ENCODE measurements at regions of chr4 and their contacts with region 1.

Region 1: DNA sequence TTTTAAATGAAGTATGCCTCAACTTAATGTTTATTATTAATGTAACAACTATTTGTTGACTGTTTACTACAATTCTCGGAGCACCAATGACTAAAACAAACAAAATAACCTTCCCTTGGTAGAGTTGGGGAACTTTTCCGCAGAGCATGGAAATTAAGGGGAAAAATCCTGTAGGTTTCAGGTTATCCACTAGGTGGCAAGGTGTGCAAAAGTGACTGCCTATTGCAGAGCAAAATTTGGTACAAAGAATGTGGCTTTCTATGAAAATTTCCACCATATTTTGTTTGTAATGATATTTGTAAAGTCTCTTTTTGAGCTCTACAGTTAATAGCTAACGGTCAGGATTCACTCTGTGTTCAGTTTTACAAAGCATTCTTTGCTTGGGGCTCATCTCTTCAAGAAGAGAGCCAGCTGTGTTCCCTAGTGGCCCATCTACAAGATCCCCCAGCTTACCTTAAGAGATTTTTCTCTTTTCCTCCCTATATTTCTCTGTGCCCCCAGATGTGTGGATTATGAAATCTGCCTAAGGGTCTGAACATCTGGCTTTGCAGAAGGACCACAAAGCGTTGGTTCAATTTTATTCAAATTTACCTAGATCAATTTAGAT is 61.1 kb downstream of the FBXO8 start:
- DNase-seq: no peak
- H3K4me3 ChIP-seq: no peak overlapping the region
- H3K27ac ChIP-seq: no peak overlapping the region
- H3K4me1 ChIP-seq: peaks cover 0 to under 1% of the 10 kb centered on the region in 2 donors
- H3K27me3 ChIP-seq: no peaks in the 10 kb centered on the region
- CTCF ChIP-seq: peak in 2 of 3 experiments; percentile 49 to 62

Region 2: DNA sequence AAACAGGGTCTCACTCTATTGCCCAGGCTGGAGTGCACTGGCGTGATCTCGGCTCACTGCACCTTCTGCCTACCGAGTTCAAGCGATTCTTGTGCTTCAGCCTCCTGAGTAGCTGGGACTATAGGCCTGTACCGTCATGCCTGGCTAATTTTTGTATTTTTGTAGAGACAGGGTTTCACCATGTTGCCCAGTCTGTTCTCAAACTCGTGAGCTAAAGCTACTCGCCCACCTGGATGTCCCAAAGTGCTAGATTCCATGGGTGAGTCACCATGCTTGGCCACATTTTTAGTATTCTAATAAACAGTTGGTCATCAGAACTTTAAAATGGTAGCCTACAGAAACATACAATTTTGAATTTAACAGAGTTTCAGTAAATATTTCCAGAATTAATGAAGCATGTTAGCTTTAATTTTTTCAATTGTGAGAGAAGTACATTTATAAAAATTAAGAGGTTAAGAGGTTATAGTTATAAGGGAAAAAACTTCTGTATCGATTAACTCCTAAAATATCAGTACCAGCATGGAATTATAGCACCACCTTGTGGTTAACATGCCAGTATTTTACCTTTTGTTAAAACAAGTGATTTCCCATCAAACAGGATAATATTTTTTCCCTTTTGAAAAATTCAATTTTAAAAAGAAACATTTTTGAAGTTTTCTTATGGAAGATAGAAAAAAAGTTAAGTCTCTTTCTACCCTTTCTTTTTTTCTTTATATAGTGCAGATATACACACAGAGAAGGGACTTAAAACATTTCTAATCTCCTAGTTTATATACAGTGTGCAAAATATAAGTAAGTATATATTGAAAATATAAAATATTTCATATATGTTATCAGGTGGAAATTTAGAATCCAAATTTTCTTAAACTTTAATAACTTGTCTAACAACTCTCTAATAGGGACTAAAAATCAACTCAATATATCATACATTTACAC is 96.7 kb after region 1 on chr4:
- intact Hi-C with region 1: loop called (anchors 5 kb)
- DNase-seq: no peak
- H3K4me3 ChIP-seq: no peak overlapping the region
- H3K27ac ChIP-seq: no peak overlapping the region
- H3K4me1 ChIP-seq: no peaks in the 10 kb centered on the region
- H3K27me3 ChIP-seq: no peaks in the 10 kb centered on the region
- CTCF ChIP-seq: peak in 2 of 3 experiments; percentile 47 to 65

Region 3: DNA sequence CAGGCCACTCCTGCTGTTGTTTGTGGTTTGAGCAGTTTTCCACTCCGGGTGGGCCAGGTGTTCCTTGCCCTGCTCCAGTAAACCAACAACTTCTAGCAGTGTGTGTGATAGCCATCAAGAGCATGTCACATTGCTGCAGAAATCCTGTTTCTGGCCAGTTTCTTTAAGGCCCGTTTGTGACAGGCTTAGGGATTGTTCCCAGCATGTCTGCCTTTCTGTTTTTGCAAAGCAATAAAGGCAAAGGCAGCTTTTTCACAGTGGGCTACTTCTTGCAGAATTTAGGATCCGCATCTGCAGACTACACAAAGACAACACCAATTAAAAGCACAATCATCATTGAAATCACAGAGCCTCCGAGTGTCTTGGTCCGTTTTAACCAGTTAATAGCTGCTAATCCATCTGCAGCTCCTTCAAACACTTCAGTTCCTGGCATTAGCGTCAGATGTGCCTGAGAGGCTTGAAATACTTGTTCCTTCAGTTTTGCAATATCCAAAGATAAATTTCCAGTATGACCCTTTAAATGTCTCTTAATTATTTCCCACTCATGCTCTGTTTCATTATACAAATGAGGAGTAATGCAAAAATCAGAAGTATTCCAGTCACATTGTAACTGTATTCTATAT is 760.9 kb after region 1 on chr4:
- intact Hi-C with region 1: no loop called
- DNase-seq: no peak
- H3K4me3 ChIP-seq: no peak overlapping the region
- H3K27ac ChIP-seq: no peak overlapping the region
- H3K4me1 ChIP-seq: no peaks in the 10 kb centered on the region
- H3K27me3 ChIP-seq: no peaks in the 10 kb centered on the region
- CTCF ChIP-seq: no peak

Measured in ascending aorta (tissue), 2 donors.